Left cardiac atrium (tissue), 4 donors: ENCODE measurements at regions of chr15 and their contacts with region 1.

Region 1: GRCh38 chr15:98904544-98904943 is 103.0 kb downstream of the PGPEP1L start:
- DNase-seq: no peak
- ATAC-seq: no peak

Region 2: GRCh38 chr15:98548154-98548971 is 356.2 kb before region 1 on chr15:
- intact Hi-C with region 1: loop called in 1 of 2 experiments (anchors 10 kb)
- DNase-seq: peak; percentile 84
- ATAC-seq: peak; percentile 89 to 93

Region 3: GRCh38 chr15:98865397-98866339 is 38.9 kb before region 1 on chr15:
- intact Hi-C with region 1: loop called in 1 of 2 experiments (anchors 5 kb)
- DNase-seq: peak; percentile 86
- ATAC-seq: peak; percentile 93 to 96